ENCODE measurements at regions of chr18 and their contacts with region 1.

Region 1: DNA sequence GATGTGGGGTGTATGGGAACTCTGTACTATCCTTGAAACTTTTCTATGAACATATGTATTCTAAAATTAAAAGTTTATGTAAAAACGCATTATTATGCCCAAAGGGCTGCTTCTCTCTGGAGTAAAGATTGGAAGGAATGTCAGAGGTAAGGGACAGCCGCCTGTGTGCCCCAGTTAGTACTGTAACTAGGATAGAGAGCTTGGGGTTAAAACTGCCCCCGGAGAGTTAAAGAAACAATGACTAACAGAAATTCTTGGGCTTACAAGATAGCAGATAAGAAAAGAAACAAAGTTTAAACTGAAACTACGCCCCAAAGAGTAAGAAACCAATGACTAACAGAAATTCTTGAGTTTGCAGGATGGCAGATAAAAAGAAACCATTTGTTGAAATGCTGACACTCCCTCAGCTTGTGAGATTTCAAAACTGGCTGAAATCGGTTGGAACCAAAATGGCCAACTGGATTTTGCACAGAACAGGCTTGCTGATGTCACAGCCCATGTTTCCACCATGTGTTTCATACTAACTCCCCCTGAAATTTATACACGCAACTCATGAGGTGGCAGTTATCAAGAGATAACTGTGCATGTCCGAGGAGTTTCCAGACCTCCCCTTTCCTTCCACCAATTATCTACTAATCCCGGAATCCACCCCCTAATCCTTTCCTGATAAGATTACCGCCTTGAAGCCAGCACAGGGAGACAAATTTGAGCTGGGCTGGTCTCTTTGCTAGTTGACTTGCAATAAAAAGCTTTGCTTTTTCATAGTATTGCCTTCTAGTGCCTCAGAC is 8.7 kb upstream of the TXNDC2 start:
- DNase-seq: peak; percentile 89
- H3K4me3 ChIP-seq: peak overlapping the region; percentile 8 to 34 (median 19)
- H3K27ac ChIP-seq: peak overlapping the region; percentile 89
- H3K4me1 ChIP-seq: peaks cover 27% of the 10 kb centered on the region
- H3K27me3 ChIP-seq: no peaks in the 10 kb centered on the region
- CTCF ChIP-seq: no peak
- POLR2A ChIP-seq: peak; percentile 82

Region 2: DNA sequence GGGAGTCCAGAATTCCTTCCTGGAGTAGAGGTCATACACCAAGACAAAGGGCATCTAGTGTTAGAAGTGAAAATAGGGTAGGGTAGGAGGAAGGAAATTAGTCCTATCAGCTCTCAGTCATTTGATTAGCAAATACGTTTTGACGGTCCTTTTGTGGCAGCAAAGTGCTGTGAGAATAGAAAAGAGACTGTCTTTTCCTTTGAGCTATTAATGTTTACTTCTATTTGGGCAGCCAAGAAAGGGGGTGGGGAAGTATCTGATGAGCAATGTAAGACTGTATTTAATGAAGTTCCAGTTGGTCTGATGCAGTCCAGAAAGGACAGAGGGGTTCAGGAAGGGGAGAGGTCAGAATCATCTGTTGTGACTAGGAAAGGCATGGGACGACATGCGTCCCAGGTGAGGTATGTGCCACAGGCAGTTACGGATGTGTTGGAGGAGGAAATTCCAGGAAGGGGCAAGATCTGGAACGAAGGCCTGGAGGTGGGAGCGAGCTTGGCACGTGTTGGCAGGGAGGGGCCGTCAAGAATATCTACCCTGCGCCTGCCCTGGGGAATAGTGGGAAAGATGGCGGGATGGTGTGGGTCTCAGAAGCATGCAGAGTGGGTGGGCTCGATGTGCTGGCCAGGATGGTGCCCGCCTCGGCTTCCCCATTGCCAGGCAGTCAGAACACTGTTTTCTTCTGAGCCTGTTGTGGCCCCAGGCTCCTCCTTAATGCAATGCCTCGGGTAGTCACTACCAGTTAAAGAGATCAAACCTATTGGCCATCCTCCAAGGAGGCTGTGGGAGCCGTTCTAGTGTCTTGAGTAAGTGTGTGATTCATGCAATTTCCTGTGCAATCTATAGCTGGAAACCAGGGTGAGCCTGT is 49.2 kb before region 1 on chr18:
- CTCF ChIA-PET with region 1: no interaction called
- POLR2A ChIA-PET with region 1: no interaction called
- dilution Hi-C with region 1: no loop called
- intact Hi-C with region 1: loop called (anchors 2 kb)
- DNase-seq: peak; percentile 95
- H3K4me3 ChIP-seq: no peak overlapping the region
- H3K27ac ChIP-seq: peak overlapping the region; percentile 66
- H3K4me1 ChIP-seq: peaks cover 34% of the 10 kb centered on the region
- H3K27me3 ChIP-seq: no peaks in the 10 kb centered on the region
- CTCF ChIP-seq: no peak
- POLR2A ChIP-seq: peak; percentile 59

Region 3: DNA sequence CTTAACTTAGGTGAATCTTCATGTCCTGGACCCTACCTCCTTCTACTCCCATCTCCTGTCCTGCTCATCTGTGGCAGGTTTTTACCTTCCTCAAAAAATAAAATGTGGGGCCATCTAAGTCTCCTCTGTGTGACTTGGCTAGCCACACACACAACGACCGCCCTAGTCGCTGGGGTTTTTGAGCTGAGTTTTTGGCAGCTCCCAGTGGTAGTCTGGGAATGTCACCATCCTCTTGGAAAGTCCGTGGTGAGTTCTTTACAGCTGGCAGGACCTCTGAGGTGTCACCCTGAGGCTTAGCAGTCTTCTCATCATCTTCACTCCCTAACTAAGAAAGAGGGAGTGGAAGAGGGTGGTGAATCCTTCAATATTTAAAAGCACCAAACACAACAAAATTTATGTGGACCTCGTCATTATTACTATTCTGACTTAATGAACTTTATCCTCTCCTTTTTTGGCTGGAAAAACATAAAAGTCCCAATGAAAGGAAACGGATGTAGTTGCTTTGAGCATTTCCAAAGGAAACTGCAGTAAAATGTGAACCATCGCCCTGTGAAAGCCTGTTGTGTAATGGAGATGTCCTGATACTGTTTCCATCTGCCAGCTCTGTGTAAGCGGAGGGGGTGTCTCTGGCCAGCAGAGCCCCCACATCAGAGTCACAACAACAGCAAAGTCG is 115.4 kb after region 1 on chr18:
- CTCF ChIA-PET with region 1: no interaction called
- POLR2A ChIA-PET with region 1: no interaction called
- dilution Hi-C with region 1: no loop called
- intact Hi-C with region 1: no loop called
- DNase-seq: peak; percentile 77
- H3K4me3 ChIP-seq: no peak overlapping the region
- H3K27ac ChIP-seq: no peak overlapping the region
- H3K4me1 ChIP-seq: no peaks in the 10 kb centered on the region
- H3K27me3 ChIP-seq: peaks cover 13 to 26% of the 10 kb centered on the region in 2 experiments
- CTCF ChIP-seq: no peak
- POLR2A ChIP-seq: no peak